CD4-positive, alpha-beta T cell (primary cell): ENCODE measurements at regions of chr21 and their contacts with region 1.

Region 1: DNA sequence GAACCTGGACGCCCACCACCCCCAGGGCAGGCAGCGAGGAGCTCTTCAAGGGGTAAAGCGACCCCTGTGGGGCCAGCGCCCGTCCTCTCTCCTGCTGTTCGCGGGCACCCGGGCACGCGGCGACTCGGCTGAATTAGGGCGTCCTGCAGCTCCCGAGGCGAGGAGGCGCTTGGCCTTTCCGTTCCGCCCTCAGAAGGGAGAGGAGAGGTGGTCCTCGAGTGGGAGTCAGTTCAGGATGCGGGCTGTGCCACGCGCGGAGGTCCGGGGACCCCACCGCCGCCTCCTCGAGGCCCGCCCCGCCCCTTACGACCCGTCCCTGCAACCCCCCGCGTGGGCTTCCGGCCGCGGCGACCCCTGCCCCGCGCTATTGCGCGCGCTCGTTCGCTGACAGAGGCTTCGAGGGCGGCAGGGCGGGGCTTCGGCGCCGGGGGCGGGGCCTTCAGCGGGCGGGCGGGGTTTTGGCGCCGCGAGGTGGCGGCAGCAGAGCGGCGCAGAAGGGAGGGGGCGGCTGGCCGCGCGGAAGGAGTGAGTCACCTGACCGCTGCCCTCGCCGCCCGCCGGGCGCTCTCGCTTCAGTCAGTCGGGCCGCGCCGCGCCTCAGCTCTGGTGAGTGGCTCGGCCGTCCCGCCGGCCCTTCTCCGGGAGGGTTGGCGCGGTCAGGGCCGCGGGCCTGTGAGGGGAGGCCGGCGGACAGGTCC is at the start of gene BACH1:
- DNase-seq: peak; percentile 68 to 93 (median 83)
- ATAC-seq: peak; percentile 66
- H3K4me3 ChIP-seq: peak within 1 kb of the TSS; percentile 85
- H3K4me3 Mint-ChIP-seq: peak within 1 kb of the TSS; percentile 92
- H3K27ac ChIP-seq: peak within 1 kb of the TSS; percentile 60 to 69
- H3K27ac Mint-ChIP-seq: peak within 1 kb of the TSS; percentile 86
- H3K4me1 ChIP-seq: peaks cover 46% of the 10 kb centered on the region
- H3K4me1 Mint-ChIP-seq: peaks cover 82% of the 10 kb centered on the region
- H3K27me3 ChIP-seq: no peaks in the 10 kb centered on the region
- H3K27me3 Mint-ChIP-seq: no peaks in the 10 kb centered on the region
- CTCF ChIP-seq: peak; percentile 18
- total RNA-seq, gene BACH1: 64.4 to 65.9 TPM

Region 2: GRCh38 chr21:28884976-28885852 is 413.3 kb before region 1 on chr21:
- CTCF ChIA-PET with region 1: no interaction called
- POLR2A ChIA-PET with region 1: no interaction called
- intact Hi-C with region 1: loop called in 1 of 2 experiments (anchors 5 kb)
- DNase-seq: peak; percentile 81 to 98 (median 90)
- ATAC-seq: peak; percentile 94
- H3K4me3 ChIP-seq: peak overlapping the region; percentile 62
- H3K4me3 Mint-ChIP-seq: peak overlapping the region; percentile 93
- H3K27ac ChIP-seq: peak overlapping the region; percentile 88 to 91
- H3K27ac Mint-ChIP-seq: peak overlapping the region; percentile 97
- H3K4me1 ChIP-seq: peaks cover 11% of the 10 kb centered on the region
- H3K4me1 Mint-ChIP-seq: peaks cover 23% of the 10 kb centered on the region
- H3K27me3 ChIP-seq: no peaks in the 10 kb centered on the region
- H3K27me3 Mint-ChIP-seq: no peaks in the 10 kb centered on the region
- CTCF ChIP-seq: no peak

Region 3: GRCh38 chr21:29024474-29025327 is 273.8 kb before region 1 on chr21 and contains the start of gene USP16:
- CTCF ChIA-PET with region 1: no interaction called
- POLR2A ChIA-PET with region 1: interaction called, 13 read pairs
- intact Hi-C with region 1: no loop called
- DNase-seq: peak; percentile 86 to 98 (median 90)
- ATAC-seq: peak; percentile 87
- H3K4me3 ChIP-seq: peak within 1 kb of the TSS; percentile 78
- H3K4me3 Mint-ChIP-seq: peak within 1 kb of the TSS; percentile 97
- H3K27ac ChIP-seq: peak within 1 kb of the TSS; percentile 97
- H3K27ac Mint-ChIP-seq: peak within 1 kb of the TSS; percentile 99
- H3K4me1 ChIP-seq: peaks cover 44% of the 10 kb centered on the region
- H3K4me1 Mint-ChIP-seq: peaks cover 61% of the 10 kb centered on the region
- H3K27me3 ChIP-seq: no peaks in the 10 kb centered on the region
- H3K27me3 Mint-ChIP-seq: no peaks in the 10 kb centered on the region
- CTCF ChIP-seq: no peak
- total RNA-seq, gene USP16: 79.7 to 81.7 TPM

Region 4: DNA sequence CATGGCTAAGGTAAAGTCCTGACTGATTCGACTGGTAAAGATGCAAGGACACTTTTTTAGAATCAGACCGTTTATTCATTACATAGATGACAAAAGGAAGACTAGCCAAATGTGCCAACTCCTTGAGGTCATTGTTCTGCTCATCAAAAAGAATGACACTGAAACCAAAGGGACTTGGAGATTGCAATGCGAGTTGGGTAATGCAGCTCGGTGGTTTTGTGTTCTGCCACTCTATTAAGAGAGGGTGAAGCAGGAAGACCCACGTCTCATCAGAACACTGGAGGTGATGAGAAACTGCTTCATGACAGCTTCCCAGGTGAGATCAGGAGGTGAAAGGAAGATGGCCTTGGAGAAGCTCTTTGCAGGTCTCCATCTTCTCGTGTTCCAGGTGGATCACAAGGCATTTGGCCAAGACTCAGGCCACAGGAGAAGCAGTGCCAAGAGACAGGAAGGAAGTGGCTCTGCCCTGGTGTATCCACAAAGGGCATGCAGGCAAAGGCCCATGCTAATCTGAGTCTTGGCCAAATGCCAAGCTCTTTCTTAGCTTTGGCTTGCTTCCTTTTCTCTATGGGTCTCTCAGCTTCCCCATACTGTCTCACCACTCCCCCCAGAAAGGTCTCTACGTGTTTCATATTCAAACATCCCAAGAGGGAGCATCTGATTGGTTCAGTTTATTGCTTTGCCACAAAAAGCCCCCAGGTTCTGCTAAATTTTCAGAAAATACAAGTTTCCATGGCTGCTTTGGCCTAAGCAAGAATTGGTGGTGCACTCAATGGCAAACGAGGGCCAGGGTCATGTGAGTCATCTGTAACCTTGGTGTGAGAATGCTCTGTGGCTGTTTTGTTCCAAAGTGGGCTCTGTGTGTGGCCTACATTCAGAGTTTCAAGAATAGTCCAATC is 219.4 kb before region 1 on chr21:
- CTCF ChIA-PET with region 1: interaction called, 7 read pairs
- POLR2A ChIA-PET with region 1: interaction called, 19 read pairs
- intact Hi-C with region 1: loop called in 1 of 2 experiments (anchors 2 kb)
- DNase-seq: peak in 5 of 14 experiments; percentile 5 to 75 (median 63)
- ATAC-seq: peak; percentile 18
- H3K4me3 ChIP-seq: no peak overlapping the region
- H3K4me3 Mint-ChIP-seq: peak overlapping the region; percentile 64
- H3K27ac ChIP-seq: peak overlapping the region; percentile 58
- H3K27ac Mint-ChIP-seq: peak overlapping the region; percentile 95
- H3K4me1 ChIP-seq: peaks cover 41% of the 10 kb centered on the region
- H3K4me1 Mint-ChIP-seq: peaks cover 65% of the 10 kb centered on the region
- H3K27me3 ChIP-seq: no peaks in the 10 kb centered on the region
- H3K27me3 Mint-ChIP-seq: no peaks in the 10 kb centered on the region
- CTCF ChIP-seq: no peak

Region 5: GRCh38 chr21:29342363-29342957 is 44.0 kb after region 1 on chr21:
- CTCF ChIA-PET with region 1: no interaction called
- POLR2A ChIA-PET with region 1: interaction called, 4 read pairs
- intact Hi-C with region 1: loop called in 1 of 2 experiments (anchors 5 kb)
- DNase-seq: peak in 1 of 14 experiments; percentile 60
- ATAC-seq: no peak
- H3K4me3 ChIP-seq: no peak overlapping the region
- H3K4me3 Mint-ChIP-seq: no peak overlapping the region
- H3K27ac ChIP-seq: no peak overlapping the region
- H3K27ac Mint-ChIP-seq: no peak overlapping the region
- H3K4me1 ChIP-seq: peaks cover 5% of the 10 kb centered on the region
- H3K4me1 Mint-ChIP-seq: peaks cover 17% of the 10 kb centered on the region
- H3K27me3 ChIP-seq: no peaks in the 10 kb centered on the region
- H3K27me3 Mint-ChIP-seq: no peaks in the 10 kb centered on the region
- CTCF ChIP-seq: no peak

Region 6: DNA sequence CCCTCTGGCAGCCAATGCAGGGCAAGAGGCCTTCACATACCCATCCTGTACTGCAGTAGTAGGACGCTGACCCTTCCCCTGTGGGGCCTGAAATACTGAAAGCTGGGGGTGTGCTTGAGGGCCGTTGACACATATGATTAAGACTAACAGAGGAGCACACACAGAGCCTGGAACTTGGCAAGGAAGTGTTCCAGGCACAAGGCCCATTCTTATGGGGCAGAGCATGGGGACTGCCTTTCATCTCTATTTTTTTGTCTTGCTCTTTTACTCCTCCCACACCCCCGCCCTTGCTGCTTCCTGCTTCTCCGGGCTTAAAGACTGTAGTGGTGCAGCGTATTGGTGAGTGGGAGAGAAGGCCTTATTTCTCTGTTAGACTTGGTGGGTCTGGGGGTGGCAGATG is 137.6 kb after region 1 on chr21:
- CTCF ChIA-PET with region 1: no interaction called
- POLR2A ChIA-PET with region 1: interaction called, 3 read pairs
- intact Hi-C with region 1: loop called in 1 of 2 experiments (anchors 5 kb)
- DNase-seq: peak in 13 of 14 experiments; percentile 23 to 71 (median 47)
- ATAC-seq: peak; percentile 94
- H3K4me3 ChIP-seq: peak overlapping the region; percentile 44
- H3K4me3 Mint-ChIP-seq: peak overlapping the region; percentile 76
- H3K27ac ChIP-seq: peak overlapping the region; percentile 37 to 41
- H3K27ac Mint-ChIP-seq: peak overlapping the region; percentile 83
- H3K4me1 ChIP-seq: peaks cover 16% of the 10 kb centered on the region
- H3K4me1 Mint-ChIP-seq: peaks cover 57% of the 10 kb centered on the region
- H3K27me3 ChIP-seq: no peaks in the 10 kb centered on the region
- H3K27me3 Mint-ChIP-seq: no peaks in the 10 kb centered on the region
- CTCF ChIP-seq: no peak

Region 7: DNA sequence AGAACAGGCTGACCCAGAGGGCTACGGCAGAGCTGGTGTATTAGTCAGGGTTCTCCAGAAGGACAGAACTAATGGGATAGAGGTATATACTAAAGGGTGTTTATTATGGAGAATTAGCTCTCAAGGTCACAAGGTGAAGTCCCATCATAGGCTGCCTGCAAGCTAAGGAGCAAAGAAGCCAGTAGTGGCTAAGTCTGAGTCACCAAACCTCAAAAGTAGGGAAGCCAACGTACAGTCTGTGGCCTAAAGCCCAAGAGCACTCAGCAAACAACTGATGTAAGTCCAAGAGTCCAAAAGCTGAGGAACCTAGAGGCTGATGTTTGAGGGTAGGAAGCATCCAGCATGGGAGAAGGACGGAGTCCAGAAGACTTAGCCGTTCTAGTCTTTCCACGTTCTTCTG is 179.4 kb after region 1 on chr21:
- CTCF ChIA-PET with region 1: no interaction called
- POLR2A ChIA-PET with region 1: no interaction called
- intact Hi-C with region 1: loop called in 1 of 2 experiments (anchors 10 kb)
- DNase-seq: no peak
- ATAC-seq: no peak
- H3K4me3 ChIP-seq: no peak overlapping the region
- H3K4me3 Mint-ChIP-seq: no peak overlapping the region
- H3K27ac ChIP-seq: no peak overlapping the region
- H3K27ac Mint-ChIP-seq: no peak overlapping the region
- H3K4me1 ChIP-seq: peaks cover 3% of the 10 kb centered on the region
- H3K4me1 Mint-ChIP-seq: peaks cover 31% of the 10 kb centered on the region
- H3K27me3 ChIP-seq: no peaks in the 10 kb centered on the region
- H3K27me3 Mint-ChIP-seq: no peaks in the 10 kb centered on the region
- CTCF ChIP-seq: no peak